Posterior vena cava (tissue), 2 donors: ENCODE measurements at regions of chr4 and their contacts with region 1.

Region 1: GRCh38 chr4:181737744-181738143 is 505.5 kb upstream of the TENM3 start:
- DNase-seq: no peak

Region 2: DNA sequence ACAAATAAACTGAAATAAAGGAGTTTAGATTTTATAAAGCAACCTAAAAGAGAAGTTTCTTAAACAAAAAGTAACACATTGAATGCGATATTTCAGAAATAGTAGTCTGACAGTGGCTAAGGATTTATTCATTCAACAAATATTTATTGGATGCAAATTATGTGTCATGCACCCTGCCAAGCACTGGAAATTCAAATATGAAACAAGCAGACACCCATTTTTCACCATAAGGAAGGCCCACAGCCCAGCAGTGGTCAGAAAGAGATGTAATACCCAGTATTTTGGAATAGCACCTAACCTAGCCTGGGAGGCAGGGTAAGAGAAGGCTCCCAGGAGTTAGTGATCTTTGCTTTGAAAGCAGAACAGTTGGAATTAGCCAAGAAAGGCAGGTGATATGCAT is 349.7 kb before region 1 on chr4:
- intact Hi-C with region 1: no loop called
- DNase-seq: no peak

Region 3: DNA sequence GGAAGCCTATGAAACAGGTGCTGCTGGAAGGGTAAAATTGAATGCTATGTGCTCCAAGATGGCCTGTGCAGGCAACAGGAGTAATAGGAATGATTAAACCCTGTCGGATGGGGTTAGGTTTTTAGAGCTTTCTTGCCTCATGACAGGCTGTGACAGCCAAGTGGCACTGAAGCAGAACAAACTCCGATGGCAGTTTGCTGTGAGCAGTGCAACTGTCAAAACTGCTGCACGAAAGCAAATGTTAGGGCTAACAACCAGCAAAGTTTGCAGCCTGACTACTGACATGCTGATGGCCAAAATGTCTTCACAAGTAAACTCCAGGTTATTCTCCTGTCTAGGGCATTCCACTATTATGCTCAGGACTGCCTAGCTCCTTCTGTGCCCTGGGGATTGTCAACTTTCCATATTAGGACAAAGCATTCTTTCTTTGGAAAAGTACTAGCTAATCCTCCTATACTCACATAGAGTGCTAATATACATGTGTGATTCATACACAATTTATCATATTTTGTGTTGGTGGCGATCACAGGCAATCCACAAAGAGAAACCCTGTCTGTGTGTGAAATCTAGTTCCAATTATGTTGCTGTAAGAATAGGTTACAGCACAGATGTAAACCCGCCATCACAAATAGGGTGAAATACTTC is 18.8 kb after region 1 on chr4:
- intact Hi-C with region 1: loop called in 1 of 2 experiments (anchors 1 kb)
- DNase-seq: no peak

Region 4: DNA sequence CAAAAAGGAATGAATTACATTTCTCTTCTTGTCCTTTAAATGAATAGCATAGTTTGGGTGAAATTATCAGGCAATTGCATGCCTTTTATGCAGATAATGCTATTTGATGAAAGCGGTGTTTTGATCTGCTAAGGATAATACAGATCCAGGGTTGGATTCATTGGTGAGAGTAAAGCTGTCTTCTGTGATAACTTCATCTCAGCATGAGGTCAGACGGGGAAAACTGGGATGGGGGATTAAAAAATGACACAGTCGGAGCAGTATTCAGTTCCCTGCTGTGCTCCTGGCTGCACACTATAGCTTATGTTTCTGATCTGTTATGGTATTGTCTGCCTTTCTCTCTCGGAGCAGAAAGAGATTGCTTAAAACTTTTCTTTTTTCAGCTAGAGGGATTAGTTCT is 399.6 kb after region 1 on chr4:
- intact Hi-C with region 1: no loop called
- DNase-seq: no peak